A549 (cell line): ENCODE measurements at regions of chr16 and their contacts with region 1.

Region 1: DNA sequence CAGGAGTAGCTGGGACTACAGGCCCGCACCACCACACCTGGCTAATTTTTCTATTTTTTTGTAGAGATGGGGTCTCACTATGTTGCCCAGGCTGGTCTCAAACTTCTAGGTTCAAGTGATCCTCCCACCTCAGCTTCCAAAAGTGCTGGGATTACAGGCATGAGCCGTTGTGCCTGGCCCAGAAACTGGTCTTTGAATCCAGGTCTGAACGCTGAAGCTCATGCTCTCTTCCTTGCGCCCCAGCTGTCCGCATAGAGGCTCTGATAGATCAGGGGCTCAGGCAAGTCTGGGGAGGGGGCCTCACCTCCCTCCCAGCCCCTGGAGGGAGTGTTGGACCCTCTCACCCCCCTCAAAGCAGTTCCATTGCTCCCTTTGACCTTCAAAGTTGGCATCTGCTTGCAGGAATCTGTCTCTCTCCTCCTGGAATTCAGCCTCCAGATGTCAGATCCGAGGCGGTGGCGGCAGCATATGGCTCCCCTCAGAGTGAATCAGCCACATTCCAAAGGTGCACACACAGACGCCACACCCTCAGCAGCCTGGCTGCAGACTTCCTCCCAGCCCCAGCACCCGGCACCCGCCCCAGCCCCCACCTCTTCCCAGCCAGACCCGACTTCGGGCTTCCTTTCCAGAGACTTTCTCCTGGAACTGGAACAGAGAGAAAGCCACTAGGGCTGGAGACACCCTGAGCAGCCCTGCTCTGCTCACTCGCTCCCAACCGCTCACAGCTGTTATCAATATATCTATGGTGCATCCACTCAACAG is 16.9 kb upstream of the GLIS2 start:
- DNase-seq: peak; percentile 95 to 97
- ATAC-seq: peak; percentile 96 to 99
- H3K4me3 ChIP-seq: peak overlapping the region; percentile 11; the same call in 1 of the 3 replicates
- H3K27ac ChIP-seq: peak overlapping the region; percentile 94 to 99
- H3K4me1 ChIP-seq: peaks cover 57% of the 10 kb centered on the region
- CTCF ChIP-seq: no peak
- EP300 ChIP-seq: peak in 1 of 2 experiments; percentile 49; a peak in 2 of 5 replicates
- POLR2A ChIP-seq: peak; percentile 26; the same call in 1 of the 2 replicates
- RAD21 ChIP-seq: peak; percentile 15 to 39; a peak in 2 of 5 replicates

Region 2: DNA sequence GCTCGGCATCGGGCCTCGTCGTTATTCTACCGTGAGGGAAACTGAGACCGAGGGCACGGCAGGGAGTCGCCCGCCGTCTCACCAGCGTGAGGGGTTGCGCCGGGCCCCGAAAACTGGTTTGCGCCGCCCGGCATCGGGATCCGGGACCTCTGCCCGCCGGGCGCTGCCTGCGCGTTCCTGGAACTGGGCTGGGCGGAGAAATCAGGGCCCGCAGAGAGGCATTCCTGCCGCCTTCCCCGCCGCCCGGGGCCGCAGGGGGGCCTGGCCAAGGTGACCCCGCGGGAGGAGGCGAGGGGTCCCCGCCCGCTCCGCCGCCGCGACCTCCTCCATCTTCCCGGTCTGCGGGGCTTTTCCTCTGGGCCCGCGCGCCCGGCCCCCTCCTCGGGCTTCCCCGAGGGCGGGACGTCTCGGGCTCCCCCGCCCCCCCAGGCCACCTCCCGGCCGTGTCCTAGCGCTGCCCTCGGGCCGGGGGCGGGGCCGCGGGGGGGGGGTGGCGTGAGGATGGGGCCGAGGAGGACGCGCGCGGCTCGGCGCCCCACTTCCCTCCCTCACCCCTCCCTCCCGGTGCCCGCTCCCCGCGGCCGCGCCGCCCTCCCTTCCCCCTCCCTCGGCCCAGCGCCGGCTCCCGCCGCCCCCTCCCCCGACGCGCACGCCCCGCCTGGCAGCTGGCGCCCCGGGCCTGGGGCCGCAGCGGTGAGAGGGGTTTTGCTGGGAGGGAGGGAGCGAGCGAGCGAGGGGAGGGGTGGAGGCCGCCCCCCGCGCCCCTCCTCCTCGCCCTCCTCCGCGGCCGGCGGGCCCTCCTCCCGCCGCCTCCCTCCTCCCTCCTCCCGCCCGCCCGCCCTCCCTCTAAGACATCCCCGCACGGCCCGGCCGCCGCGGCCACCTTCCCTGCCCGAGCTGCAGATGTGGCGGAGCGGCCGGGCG is 16.5 kb after region 1 on chr16 and contains the start of gene GLIS2:
- CTCF ChIA-PET with region 1: interaction called, 423 read pairs
- POLR2A ChIA-PET with region 1: interaction called, 15 read pairs
- DNase-seq: peak; percentile 78 to 89
- ATAC-seq: peak; percentile 36 to 37
- H3K4me3 ChIP-seq: peak within 1 kb of the TSS; percentile 87
- H3K27ac ChIP-seq: peak within 1 kb of the TSS; percentile 96
- H3K4me1 ChIP-seq: peaks cover 52% of the 10 kb centered on the region
- CTCF ChIP-seq: no peak
- EP300 ChIP-seq: peak in 1 of 2 experiments; percentile 51; a peak in 2 of 5 replicates
- POLR2A ChIP-seq: no peak; the same call in none of the 2 replicates
- RAD21 ChIP-seq: no peak; a peak in 1 of 5 replicates
- polyA plus RNA-seq, gene GLIS2: 5.5 and 6.8 TPM in 2 replicates

Region 3: GRCh38 chr16:4365014-4365406 is 66.1 kb after region 1 on chr16:
- CTCF ChIA-PET with region 1: no interaction called
- POLR2A ChIA-PET with region 1: no interaction called
- DNase-seq: no peak
- ATAC-seq: no peak
- H3K4me3 ChIP-seq: no peak overlapping the region
- H3K27ac ChIP-seq: no peak overlapping the region
- H3K4me1 ChIP-seq: peaks cover 19% of the 10 kb centered on the region
- CTCF ChIP-seq: no peak
- EP300 ChIP-seq: no peak
- POLR2A ChIP-seq: no peak
- RAD21 ChIP-seq: no peak

Region 4: DNA sequence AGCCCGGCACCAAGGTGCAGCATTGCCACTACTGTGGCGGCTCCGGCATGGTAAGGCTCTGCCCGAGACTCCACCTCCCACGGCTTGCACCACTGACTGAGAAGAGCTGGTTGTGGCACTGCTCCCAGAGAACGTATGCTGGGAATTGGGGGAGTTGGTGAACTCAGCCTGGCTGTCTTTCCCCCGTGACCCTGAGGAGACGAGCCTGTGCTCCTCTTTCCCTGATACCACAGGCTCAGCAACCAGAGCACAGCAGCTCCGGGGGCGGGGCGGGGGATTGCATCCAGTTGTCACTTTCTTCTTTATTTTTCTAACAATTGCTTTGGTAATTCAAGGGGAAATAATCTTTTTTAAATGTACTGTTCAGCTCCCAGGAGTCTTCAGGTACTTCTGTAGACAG is 143.4 kb after region 1 on chr16:
- CTCF ChIA-PET with region 1: no interaction called
- POLR2A ChIA-PET with region 1: no interaction called
- DNase-seq: no peak
- ATAC-seq: no peak
- H3K4me3 ChIP-seq: no peak overlapping the region
- H3K27ac ChIP-seq: no peak overlapping the region
- H3K4me1 ChIP-seq: no peaks in the 10 kb centered on the region
- CTCF ChIP-seq: no peak
- EP300 ChIP-seq: no peak
- POLR2A ChIP-seq: no peak
- RAD21 ChIP-seq: no peak

Region 5: DNA sequence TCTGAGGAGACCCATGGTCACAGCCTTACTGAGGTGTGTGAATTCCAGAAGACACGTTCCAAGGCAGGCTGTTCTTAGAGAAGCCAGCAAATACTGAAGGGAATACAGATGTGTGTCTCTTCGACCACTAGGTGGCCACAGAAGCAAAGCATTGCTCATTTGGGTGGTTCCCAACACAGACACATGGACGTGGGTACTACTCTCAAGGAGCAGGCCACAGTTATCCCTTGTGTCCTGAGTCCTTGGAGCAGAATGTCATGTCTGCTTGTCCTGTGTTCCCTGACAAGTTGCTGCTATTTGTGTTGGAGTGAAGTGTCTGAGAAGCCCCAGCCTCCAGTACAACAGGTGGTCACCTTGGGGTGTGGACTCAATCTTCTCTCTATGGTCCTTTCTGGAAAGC is 207.5 kb after region 1 on chr16:
- CTCF ChIA-PET with region 1: no interaction called
- POLR2A ChIA-PET with region 1: no interaction called
- DNase-seq: peak; percentile 62 to 77
- ATAC-seq: peak; percentile 89 to 95
- H3K4me3 ChIP-seq: no peak overlapping the region
- H3K27ac ChIP-seq: no peak overlapping the region
- H3K4me1 ChIP-seq: peaks cover 4% of the 10 kb centered on the region
- CTCF ChIP-seq: peak; percentile 88
- EP300 ChIP-seq: no peak
- POLR2A ChIP-seq: no peak
- RAD21 ChIP-seq: peak; percentile 76 to 82